ENCODE measurements at regions of chr13 and their contacts with region 1.

Region 1: GRCh38 chr13:95614641-95615245 is 29.8 kb downstream of the DZIP1 start:
- DNase-seq: no peak
- H3K4me3 Mint-ChIP-seq: no peak overlapping the region
- H3K27ac Mint-ChIP-seq: no peak overlapping the region
- H3K4me1 Mint-ChIP-seq: no peaks in the 10 kb centered on the region
- H3K27me3 Mint-ChIP-seq: peaks cover 3% of the 10 kb centered on the region

Region 2: GRCh38 chr13:95499811-95500712 is 114.7 kb before region 1 on chr13:
- CTCF ChIA-PET with region 1: no interaction called
- intact Hi-C with region 1: loop called (anchors 5 kb)
- DNase-seq: no peak
- H3K4me3 Mint-ChIP-seq: no peak overlapping the region
- H3K27ac Mint-ChIP-seq: no peak overlapping the region
- H3K4me1 Mint-ChIP-seq: no peaks in the 10 kb centered on the region
- H3K27me3 Mint-ChIP-seq: peaks cover 7% of the 10 kb centered on the region

Region 3: DNA sequence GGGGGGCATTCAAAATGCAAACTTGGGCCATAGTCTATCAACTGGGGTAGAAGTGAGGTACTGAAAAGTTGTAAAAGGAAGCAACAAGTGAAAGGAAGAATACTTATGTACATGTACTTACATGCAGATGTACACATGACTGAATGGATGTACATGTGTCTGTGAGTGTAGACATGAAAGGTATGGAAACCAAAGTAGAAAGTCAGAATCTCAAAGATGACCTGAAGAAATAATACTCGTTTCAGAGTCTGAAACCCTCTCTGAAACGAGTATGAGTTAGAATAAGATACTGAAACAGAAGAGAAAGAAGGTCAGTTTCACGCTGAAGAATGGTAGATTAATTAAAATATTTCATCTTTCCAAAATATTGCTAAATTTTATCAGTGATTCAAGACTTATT is 15.8 kb after region 1 on chr13:
- CTCF ChIA-PET with region 1: no interaction called
- intact Hi-C with region 1: no loop called
- DNase-seq: no peak
- H3K4me3 Mint-ChIP-seq: no peak overlapping the region
- H3K27ac Mint-ChIP-seq: no peak overlapping the region
- H3K4me1 Mint-ChIP-seq: peaks cover 1% of the 10 kb centered on the region
- H3K27me3 Mint-ChIP-seq: peaks cover 20% of the 10 kb centered on the region

Region 4: DNA sequence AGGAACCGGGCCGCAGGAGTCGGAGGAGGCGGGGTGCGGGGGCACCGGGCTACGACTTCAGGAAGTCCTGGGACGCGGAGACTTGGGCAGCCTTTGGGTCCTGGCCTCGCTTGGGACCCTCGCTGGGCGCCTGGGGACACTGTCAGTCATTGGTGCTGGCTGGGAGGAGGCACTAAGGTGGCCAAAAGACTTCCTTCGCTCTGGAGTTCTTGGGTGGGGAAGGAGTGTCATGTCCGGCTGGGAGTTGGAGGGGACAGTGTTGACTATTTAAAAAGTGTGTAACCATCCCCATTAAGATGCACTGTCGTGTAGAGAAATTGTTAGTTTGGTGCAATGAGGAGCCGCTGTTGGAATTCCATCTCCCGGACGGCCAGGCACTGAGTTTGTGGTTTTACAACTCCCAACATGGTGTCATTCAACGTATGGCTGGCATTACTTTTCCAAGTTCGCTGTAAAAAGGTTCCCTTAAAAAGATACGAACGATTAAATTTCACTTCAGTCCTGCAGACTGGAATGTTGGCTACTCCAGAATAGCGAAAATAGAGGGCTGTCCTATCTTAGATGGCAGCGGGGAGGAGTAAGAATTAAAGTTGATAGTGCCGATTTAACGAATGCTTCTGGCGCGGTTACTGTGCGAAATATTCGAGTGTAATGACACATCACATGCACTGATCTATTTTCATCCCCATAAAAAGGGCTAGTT is 63.0 kb after region 1 on chr13:
- CTCF ChIA-PET with region 1: no interaction called
- intact Hi-C with region 1: no loop called
- DNase-seq: peak; percentile 26
- H3K4me3 Mint-ChIP-seq: peak overlapping the region; percentile 93
- H3K27ac Mint-ChIP-seq: peak overlapping the region; percentile 83
- H3K4me1 Mint-ChIP-seq: peaks cover 60% of the 10 kb centered on the region
- H3K27me3 Mint-ChIP-seq: no peaks in the 10 kb centered on the region

Measured in activated naive CD4-positive, alpha-beta T cell treated with anti-CD3 and anti-CD28 coated beads for 36 hours (primary cell).